Dorsolateral prefrontal cortex (tissue), 120 donors: ENCODE measurements at regions of chrX and their contacts with region 1.

Region 1: GRCh38 chrX:72269671-72270251 is 7.3 kb downstream of the RPS4X start:
- DNase-seq: no peak
- H3K4me3 ChIP-seq: no peak overlapping the region
- H3K27ac ChIP-seq: peak overlapping the region in 44 of 59 donors; percentile 11 to 83 (median 56)
- H3K27me3 ChIP-seq: peaks cover 0 to 5% (median 0%) of the 10 kb centered on the region in 45 donors
- CTCF ChIP-seq: no peak

Region 2: DNA sequence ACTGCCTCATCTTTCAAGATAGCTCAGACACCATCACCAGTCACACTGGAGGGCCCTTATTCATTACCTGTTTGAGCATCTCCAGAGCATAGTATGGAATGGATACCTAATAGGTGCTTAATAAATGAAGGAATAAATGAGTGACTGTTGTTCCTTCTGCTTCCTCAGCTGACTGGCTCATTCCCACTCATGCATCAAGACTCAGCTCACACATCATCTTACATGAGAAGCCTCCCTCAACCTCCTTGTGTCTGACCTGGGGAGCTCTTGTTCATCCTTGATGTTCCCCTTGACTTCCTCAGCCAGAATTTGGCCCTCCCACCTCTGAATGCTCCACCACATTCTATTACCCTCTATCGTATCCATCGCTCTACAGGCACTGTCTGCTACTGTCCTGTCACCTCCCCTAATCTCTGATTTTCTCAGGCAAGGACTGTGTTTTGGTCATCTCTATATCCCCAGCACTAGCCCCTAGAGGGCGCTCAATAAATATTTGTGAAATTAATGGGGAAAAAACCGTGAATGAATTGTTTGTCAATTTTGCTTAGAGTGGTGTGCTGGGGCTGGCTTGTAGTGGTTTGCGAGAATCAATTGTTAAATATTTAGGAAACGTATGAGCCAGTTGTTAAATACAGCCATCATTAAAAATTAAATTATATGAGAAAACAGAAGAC is 270.8 kb before region 1 on chrX:
- intact Hi-C with region 1: loop called in 1 of 2 experiments (anchors 10 kb)
- DNase-seq: peak in 1 of 10 donors; percentile 26
- H3K4me3 ChIP-seq: no peak overlapping the region
- H3K27ac ChIP-seq: no peak overlapping the region
- H3K27me3 ChIP-seq: peaks cover 0 to 89% (median 27%) of the 10 kb centered on the region in 45 donors
- CTCF ChIP-seq: peak; percentile 12 to 75 (median 59)

Region 3: GRCh38 chrX:72181178-72182125 is 88.3 kb before region 1 on chrX and contains the start of gene PIN4:
- intact Hi-C with region 1: loop called in 1 of 2 experiments (anchors 10 kb)
- DNase-seq: peak; percentile 75 to 96 (median 92)
- H3K4me3 ChIP-seq: peak within 1 kb of the TSS; percentile 42 to 89 (median 74)
- H3K27ac ChIP-seq: peak within 1 kb of the TSS in 58 of 59 donors; percentile 24 to 91 (median 84)
- H3K27me3 ChIP-seq: peaks cover 0 to 33% (median 0%) of the 10 kb centered on the region in 45 donors
- CTCF ChIP-seq: peak in 7 of 56 donors; percentile 6 to 38 (median 10)
- total RNA-seq, gene PIN4: 8.5 to 21.1 (median 13.4) TPM